GM10248 (cell line): ENCODE measurements at regions of chr2 and their contacts with region 1.

Region 1: GRCh38 chr2:231557571-231558237 is 27.5 kb upstream of the NMUR1 start:
- DNase-seq: peak; percentile 91
- CTCF ChIP-seq: peak; percentile 68

Region 2: DNA sequence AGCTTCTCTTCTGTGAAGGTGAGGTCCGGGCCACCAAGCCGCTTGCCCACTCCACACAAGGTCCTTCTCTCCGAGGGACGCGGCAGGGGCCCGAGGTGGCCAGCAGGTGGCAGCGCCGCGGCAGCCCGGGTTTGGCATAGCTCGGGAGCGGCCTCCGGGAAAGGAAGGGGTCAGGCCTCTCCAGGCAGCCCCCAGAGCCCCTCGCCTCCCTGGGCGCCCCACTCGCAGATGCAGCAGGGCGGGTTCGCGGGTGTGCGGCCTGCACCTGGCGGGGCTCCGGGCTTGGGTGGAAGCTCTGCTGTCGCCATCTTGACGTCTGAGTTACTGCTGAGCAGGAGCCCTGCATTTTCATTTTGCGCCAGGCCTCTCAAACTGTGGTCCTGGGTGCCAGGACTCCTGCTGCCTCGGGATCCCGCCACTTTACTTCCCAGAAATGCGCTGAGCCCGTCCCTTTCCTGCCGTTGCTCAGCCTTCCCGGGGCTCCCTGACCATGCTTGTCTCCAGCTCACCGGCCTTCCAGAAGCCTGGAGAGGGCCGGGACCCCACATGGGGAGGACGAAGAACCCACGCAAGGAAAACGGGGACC is 74.8 kb before region 1 on chr2:
- CTCF ChIA-PET with region 1: interaction called, 26 read pairs
- POLR2A ChIA-PET with region 1: no interaction called
- DNase-seq: peak; percentile 89
- CTCF ChIP-seq: peak; percentile 98

Region 3: GRCh38 chr2:231514103-231514950 is 43.4 kb before region 1 on chr2:
- CTCF ChIA-PET with region 1: interaction called, 46 read pairs
- POLR2A ChIA-PET with region 1: no interaction called
- DNase-seq: peak; percentile 100
- CTCF ChIP-seq: no peak

Region 4: DNA sequence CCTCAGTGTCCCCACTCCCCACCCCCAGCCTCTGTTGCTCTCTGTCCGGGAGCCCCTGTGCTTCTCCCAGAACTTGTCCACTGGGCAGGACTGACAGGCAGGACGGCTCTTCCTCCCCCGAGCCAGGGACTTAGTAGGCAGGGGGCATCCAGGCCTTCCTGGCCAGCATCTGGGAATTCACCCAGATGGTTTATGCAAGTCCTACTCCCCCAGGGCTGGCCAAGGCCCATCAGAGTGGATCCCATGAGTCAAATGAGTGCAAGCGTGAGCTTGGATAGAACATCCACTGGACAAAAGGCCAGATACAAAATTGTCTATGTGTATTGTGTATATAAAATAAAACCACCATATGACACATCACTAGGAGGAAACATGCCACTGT is 34.9 kb before region 1 on chr2:
- CTCF ChIA-PET with region 1: interaction called, 187 read pairs
- POLR2A ChIA-PET with region 1: no interaction called
- DNase-seq: no peak
- CTCF ChIP-seq: no peak

Region 5: GRCh38 chr2:231530091-231531011 is 27.4 kb before region 1 on chr2 and contains the start of gene NMUR1:
- CTCF ChIA-PET with region 1: interaction called, 187 read pairs
- POLR2A ChIA-PET with region 1: no interaction called
- DNase-seq: peak; percentile 87
- CTCF ChIP-seq: peak; percentile 86

Region 6: GRCh38 chr2:231535961-231536360 is 21.7 kb before region 1 on chr2:
- CTCF ChIA-PET with region 1: interaction called, 187 read pairs
- POLR2A ChIA-PET with region 1: interaction called, 3 read pairs
- DNase-seq: no peak
- CTCF ChIP-seq: no peak

Region 7: DNA sequence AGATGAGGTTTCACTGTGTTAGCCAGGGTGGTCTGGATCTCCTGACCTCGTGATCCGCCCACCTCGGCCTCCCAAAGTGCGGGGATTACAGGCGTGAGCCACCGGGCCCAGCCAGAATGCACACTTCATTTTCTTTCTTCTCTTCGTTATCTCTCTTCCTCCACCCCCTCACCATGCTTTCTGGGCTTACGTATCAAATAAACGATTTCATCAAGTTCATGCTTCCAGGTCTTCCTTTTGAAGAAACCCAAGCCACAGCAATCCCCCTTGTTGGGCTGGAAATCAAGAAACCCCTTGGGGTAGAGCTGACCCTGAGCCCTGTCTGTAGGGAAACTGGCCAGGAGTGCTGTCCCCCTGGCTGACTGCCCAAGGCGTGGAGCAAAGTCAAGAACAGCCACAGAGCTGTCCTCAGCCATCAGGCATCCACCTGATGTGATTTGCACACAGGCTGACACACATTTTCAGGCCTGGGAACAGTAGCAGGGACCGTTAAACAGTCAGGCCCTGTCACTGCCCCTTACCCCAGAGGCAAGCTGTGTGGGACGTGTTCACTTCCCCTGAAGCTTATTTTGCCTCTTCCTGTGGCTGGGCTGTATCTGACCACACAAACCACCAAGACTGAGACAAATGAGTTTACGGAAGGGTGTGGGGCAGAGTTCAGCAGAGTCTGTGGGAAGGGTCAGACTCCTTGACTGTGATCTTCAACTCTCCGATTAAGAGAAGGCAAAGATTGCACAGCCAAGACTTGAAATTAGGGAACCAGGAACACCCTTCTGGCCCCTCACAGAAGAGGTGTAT is 12.4 kb before region 1 on chr2:
- CTCF ChIA-PET with region 1: interaction called, 45 read pairs
- POLR2A ChIA-PET with region 1: interaction called, 5 read pairs
- DNase-seq: peak; percentile 89
- CTCF ChIP-seq: no peak

Region 8: DNA sequence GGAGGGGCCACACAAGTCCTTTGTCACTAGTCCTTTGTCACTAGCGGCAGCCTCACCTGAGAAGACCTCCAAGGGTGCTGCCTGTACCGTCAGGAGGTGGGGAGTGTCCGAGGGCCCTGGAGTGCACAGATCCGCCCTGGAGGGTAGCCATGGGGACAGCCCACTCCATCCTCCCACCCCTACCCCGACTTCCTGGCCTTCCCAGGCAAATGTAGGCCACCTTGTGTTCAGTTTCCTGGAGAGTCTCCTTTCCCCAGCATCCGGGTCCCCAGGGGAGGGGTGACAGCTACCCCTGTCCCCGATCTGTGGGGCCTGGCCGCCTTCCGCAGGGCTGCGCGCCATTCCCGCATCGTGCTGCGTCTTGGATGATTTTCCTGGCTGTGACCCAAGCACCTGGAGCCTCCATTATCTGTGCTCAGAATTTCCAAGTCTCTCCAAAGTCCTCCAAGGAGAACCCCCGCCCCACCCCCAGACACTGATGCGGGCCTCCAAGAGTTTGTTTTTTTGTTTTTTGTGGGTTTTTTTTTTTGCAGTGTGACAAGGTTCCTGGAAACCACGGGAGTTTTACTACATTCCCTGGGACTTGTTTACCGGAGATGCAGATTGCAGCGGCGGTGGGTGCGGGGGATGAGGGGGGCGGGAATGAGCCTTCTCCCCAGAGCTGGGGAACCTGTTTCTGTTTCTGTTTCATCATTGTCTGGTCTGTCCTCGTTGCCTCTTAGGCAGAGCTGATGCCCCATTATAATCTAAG is 63.6 kb after region 1 on chr2:
- CTCF ChIA-PET with region 1: no interaction called
- POLR2A ChIA-PET with region 1: no interaction called
- DNase-seq: no peak
- CTCF ChIP-seq: no peak